HCT116 (cell line): ENCODE measurements at regions of chr6 and their contacts with region 1.

Region 1: DNA sequence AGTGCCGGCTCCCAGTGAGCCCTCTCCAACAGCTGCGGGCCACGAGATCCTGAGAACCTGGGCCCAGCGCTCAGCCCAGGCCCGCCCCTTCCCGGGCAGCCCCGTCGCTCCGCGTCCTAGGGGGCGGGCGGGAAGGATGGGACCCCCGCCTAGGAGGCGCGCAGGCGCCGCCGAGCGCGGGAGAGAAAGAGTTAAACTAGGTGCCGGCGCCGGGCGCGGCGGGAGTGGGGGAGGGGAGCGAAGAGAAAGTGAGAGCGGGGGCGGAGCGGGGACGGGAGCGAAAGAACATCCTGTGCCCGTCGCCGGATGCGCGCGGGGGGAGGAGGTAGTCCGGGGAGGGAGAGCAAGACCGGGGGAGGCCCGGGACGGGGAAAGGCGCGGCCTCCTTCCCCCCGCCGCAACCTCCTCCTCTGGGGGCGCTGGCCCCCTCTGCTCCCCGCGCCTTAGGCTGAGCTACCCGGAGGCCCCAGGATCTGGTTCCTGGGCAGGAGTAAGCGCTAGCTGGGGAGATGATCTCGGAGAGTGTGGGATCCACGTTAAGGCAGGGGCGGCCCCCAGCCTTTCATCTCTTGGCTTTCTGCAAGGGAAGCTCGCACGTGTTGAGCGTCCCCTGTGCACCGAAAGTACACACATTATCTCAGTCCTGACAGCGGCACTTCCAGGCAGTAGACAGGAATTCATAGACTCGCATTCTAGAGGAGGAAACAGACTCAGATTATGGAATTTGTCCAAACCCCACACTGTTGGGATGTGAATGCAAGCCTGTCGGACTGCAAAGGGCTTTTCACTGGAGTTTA is 4.9 kb upstream of the ARMC12 start:
- DNase-seq: no peak
- ATAC-seq: peak; percentile 56
- H3K4me3 ChIP-seq: peak overlapping the region; percentile 54 to 67
- H3K27ac ChIP-seq: peak overlapping the region; percentile 95
- H3K4me1 ChIP-seq: peaks cover 54 to 67% of the 10 kb centered on the region in 2 experiments
- H3K27me3 ChIP-seq: no peaks in the 10 kb centered on the region
- CTCF ChIP-seq: no peak
- POLR2A ChIP-seq: no peak
- RAD21 ChIP-seq: no peak

Region 2: DNA sequence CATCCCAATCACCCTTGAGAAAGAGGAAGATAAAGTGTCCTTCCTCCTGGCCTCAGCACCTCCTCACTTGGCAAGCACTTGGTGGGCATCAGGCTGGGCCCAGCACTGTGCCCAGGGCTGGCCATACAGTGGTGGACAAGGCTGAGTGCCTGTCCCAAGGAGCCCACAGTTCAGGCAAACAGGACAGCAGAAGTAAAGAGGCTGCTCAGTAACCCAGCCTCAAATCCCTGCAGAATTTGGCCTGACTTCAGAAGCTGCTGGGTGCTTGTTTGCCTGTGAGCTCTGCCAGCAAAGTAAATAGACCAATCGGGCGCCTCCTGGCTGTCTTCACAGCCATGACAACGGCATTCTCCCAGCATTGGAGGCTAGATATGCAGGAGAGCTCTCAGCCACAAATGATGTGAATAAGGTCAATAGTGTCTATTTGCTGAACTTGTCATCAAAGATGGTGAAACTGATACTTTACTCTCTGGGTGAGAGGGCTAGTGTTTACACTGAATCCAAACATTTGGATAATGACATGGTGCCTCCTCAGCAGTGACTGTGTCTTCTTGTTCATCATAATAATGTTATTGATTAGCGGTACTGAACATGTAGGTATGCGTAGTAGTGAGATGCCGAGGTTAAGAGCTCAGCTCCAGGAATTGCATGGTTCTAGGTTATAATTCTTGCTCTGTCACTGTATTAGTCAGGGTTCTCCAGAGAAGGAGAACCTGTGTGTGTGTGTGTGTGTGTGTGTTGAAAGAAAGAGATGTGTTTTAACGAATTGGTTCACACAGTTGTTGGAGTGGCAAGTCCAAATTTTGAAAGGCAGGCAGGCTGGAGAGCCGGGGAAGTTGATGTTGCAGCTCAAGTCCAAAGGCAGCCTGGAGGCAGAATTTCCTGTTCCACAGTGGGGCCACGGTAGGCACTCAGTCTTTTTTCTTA is 316.6 kb before region 1 on chr6:
- CTCF ChIA-PET with region 1: no interaction called
- POLR2A ChIA-PET with region 1: no interaction called
- RAD21 ChIA-PET with region 1: no interaction called
- intact Hi-C with region 1: no loop called
- DNase-seq: no peak
- ATAC-seq: peak; percentile 81
- H3K4me3 ChIP-seq: no peak overlapping the region
- H3K27ac ChIP-seq: no peak overlapping the region
- H3K4me1 ChIP-seq: peaks cover 0 to 11% of the 10 kb centered on the region in 2 experiments; a peak in 3 of 4 replicates
- H3K27me3 ChIP-seq: no peaks in the 10 kb centered on the region
- CTCF ChIP-seq: peak; percentile 46 to 64 (median 57); a peak in 5 of 6 replicates
- POLR2A ChIP-seq: no peak
- RAD21 ChIP-seq: peak; percentile 66

Region 3: DNA sequence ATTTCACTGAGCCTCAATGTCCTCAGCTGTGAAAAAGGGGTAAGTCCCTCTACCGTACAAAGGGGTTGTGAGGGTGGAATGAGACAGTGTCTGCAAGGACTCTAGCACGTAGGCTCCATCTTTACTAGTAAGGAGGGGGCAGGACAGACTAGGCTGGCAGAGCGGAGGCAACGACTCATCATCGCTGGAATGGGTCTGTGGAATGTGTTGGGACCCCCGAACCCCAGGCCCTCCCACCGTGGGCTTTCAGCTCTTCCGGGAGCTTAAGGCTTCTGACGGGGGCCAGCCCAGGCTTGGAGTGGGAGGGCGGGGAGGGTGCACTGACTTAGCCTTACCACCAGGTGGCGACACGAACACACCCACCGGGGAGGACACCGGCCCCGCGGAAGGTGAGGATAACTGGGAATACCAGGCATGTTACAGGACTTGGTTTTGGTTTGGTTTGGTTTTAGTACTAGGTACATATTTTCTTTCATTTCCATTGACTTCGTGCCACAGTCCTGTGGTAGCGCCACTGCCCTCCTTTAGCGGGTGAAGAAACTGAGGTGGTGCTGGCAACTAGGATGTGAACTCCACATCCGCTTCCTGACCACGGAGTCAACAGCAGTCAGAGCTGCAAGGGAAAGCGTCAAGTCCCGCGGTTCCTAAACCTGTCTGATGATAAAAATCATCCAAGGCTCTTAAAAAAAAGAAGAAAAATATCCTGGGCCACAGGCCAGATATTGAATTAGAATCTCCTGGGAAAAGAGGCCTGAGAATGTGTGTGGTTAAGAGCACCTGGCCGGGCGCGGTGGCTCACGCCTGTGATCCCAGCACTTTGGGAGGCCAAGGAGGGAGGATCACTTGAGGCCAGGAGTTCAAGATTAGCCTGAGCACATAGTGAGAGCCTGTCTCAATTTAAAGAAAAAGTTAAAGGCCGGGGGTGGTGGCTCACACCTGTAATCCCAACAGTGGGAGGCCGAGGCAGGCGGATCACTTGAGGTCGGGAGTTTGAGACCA is 209.0 kb before region 1 on chr6:
- CTCF ChIA-PET with region 1: interaction called, 66 read pairs
- POLR2A ChIA-PET with region 1: no interaction called
- RAD21 ChIA-PET with region 1: interaction called, 14 to 20 read pairs
- intact Hi-C with region 1: loop called (anchors 1 kb)
- DNase-seq: peak; percentile 39
- ATAC-seq: peak; percentile 97
- H3K4me3 ChIP-seq: 0 out of 4 replicates have a peak overlapping the region, but pooled peaks of 1 of the 2 experiments have one; percentile 2
- H3K27ac ChIP-seq: no peak overlapping the region
- H3K4me1 ChIP-seq: peaks cover 0 to 17% of the 10 kb centered on the region in 2 experiments; a peak in 3 of 4 replicates
- H3K27me3 ChIP-seq: no peaks in the 10 kb centered on the region
- CTCF ChIP-seq: peak; percentile 90 to 92 (median 90)
- POLR2A ChIP-seq: no peak
- RAD21 ChIP-seq: peak; percentile 98

Region 4: DNA sequence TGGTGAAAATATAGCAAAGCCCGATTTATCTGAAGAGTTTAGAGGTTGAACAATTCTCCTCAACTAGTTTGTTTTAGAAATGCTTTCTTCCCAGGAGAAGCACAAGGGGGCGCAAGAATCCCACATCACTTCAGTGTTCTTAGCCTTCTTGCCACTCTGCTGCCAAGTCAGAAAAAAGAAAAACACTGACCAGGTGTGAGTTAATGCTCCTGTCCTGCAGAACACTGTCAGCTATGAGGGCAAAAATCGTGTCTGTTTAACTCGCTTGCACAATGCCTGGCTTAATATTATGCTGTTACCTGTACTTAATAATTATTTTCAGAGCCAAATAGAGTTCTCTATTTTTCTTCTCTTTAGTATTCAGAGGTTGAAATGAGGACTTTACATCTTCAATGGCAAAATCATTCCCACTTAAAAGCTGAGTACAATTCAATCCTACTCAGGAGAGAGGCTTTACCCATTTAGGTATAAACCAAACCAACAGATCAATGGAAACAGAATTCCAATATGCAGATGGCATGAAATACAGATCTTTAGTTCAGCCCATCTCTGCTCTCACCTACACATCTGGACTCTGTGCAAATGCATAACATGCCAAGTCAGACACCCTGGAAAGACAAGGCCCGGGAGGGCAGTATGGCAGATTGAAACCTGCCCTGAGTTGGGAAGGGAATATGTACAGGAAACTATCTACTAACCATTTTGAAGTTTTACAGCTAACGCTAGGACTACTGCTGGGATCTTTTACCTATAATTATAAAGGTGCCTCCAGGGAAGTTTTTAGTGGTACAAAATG is 147.8 kb before region 1 on chr6:
- CTCF ChIA-PET with region 1: interaction called, 73 read pairs
- POLR2A ChIA-PET with region 1: interaction called, 3 read pairs
- RAD21 ChIA-PET with region 1: interaction called in 1 of 2 experiments, 3 read pairs
- intact Hi-C with region 1: loop called (anchors 1 kb)
- DNase-seq: peak; percentile 68
- ATAC-seq: peak; percentile 84
- H3K4me3 ChIP-seq: no peak overlapping the region
- H3K27ac ChIP-seq: peak overlapping the region; percentile 30; the same call in 1 of the 2 replicates
- H3K4me1 ChIP-seq: peaks cover 10 to 16% of the 10 kb centered on the region in 2 experiments
- H3K27me3 ChIP-seq: no peaks in the 10 kb centered on the region
- CTCF ChIP-seq: peak; percentile 83 to 94 (median 91)
- POLR2A ChIP-seq: no peak
- RAD21 ChIP-seq: peak; percentile 98

Region 5: GRCh38 chr6:35688581-35689322 is 43.2 kb before region 1 on chr6 and contains the start of gene FKBP5:
- CTCF ChIA-PET with region 1: interaction called, 4 read pairs
- POLR2A ChIA-PET with region 1: no interaction called
- RAD21 ChIA-PET with region 1: interaction called in 1 of 2 experiments, 3 read pairs
- intact Hi-C with region 1: loop called (anchors 2 kb)
- DNase-seq: peak; percentile 70
- ATAC-seq: peak; percentile 95
- H3K4me3 ChIP-seq: peak within 1 kb of the TSS; percentile 76 to 87
- H3K27ac ChIP-seq: peak within 1 kb of the TSS; percentile 90
- H3K4me1 ChIP-seq: peaks cover 12 to 14% of the 10 kb centered on the region in 2 experiments; a peak in 3 of 4 replicates
- H3K27me3 ChIP-seq: no peaks in the 10 kb centered on the region
- CTCF ChIP-seq: no peak
- POLR2A ChIP-seq: peak; percentile 85
- RAD21 ChIP-seq: no peak
- total RNA-seq, gene FKBP5: 50.3 TPM

Region 6: GRCh38 chr6:36196880-36197548 is 465.1 kb after region 1 on chr6:
- CTCF ChIA-PET with region 1: no interaction called
- POLR2A ChIA-PET with region 1: no interaction called
- RAD21 ChIA-PET with region 1: no interaction called
- intact Hi-C with region 1: no loop called
- DNase-seq: peak; percentile 91
- ATAC-seq: peak; percentile 94
- H3K4me3 ChIP-seq: peak overlapping the region; percentile 53 to 70
- H3K27ac ChIP-seq: peak overlapping the region; percentile 75
- H3K4me1 ChIP-seq: peaks cover 5 to 17% of the 10 kb centered on the region in 2 experiments; a peak in 3 of 4 replicates
- H3K27me3 ChIP-seq: no peaks in the 10 kb centered on the region
- CTCF ChIP-seq: no peak
- POLR2A ChIP-seq: no peak
- RAD21 ChIP-seq: no peak